Activated B cell treated with CpG ODN at 0.5 μM for 24 hours (primary cell): ENCODE measurements at regions of chr3 and their contacts with region 1.

Region 1: GRCh38 chr3:52428151-52429005 is 16.5 kb downstream of the SEMA3G start:
- DNase-seq: no peak
- ATAC-seq: peak; percentile 57
- H3K4me3 Mint-ChIP-seq: no peak overlapping the region
- H3K27ac Mint-ChIP-seq: no peak overlapping the region
- H3K4me1 Mint-ChIP-seq: peaks cover 4% of the 10 kb centered on the region
- H3K27me3 Mint-ChIP-seq: no peaks in the 10 kb centered on the region
- CTCF ChIP-seq: no peak

Region 2: GRCh38 chr3:51982782-51983577 is 445.4 kb before region 1 on chr3 and contains the start of gene ACY1:
- CTCF ChIA-PET with region 1: no interaction called
- POLR2A ChIA-PET with region 1: no interaction called
- intact Hi-C with region 1: no loop called
- DNase-seq: peak; percentile 70
- ATAC-seq: peak; percentile 79
- H3K4me3 Mint-ChIP-seq: peak within 1 kb of the TSS; percentile 86
- H3K27ac Mint-ChIP-seq: peak within 1 kb of the TSS; percentile 91
- H3K4me1 Mint-ChIP-seq: peaks cover 23% of the 10 kb centered on the region
- H3K27me3 Mint-ChIP-seq: no peaks in the 10 kb centered on the region
- CTCF ChIP-seq: no peak
- total RNA-seq, gene ACY1: 24.9 and 26.7 TPM in 2 replicates

Region 3: GRCh38 chr3:52407779-52408178 is 20.6 kb before region 1 on chr3:
- CTCF ChIA-PET with region 1: interaction called, 11 read pairs
- POLR2A ChIA-PET with region 1: no interaction called
- intact Hi-C with region 1: loop called (anchors 1 kb)
- DNase-seq: no peak
- ATAC-seq: no peak
- H3K4me3 Mint-ChIP-seq: no peak overlapping the region
- H3K27ac Mint-ChIP-seq: no peak overlapping the region
- H3K4me1 Mint-ChIP-seq: peaks cover 35% of the 10 kb centered on the region
- H3K27me3 Mint-ChIP-seq: no peaks in the 10 kb centered on the region
- CTCF ChIP-seq: no peak

Region 4: GRCh38 chr3:52444860-52445793 is 16.7 kb after region 1 on chr3 and contains the start of gene SEMA3G:
- CTCF ChIA-PET with region 1: interaction called, 37 read pairs
- POLR2A ChIA-PET with region 1: no interaction called
- intact Hi-C with region 1: loop called (anchors 1 kb)
- DNase-seq: peak; percentile 62
- ATAC-seq: peak; percentile 97
- H3K4me3 Mint-ChIP-seq: no peak within 1 kb of the TSS
- H3K27ac Mint-ChIP-seq: no peak within 1 kb of the TSS
- H3K4me1 Mint-ChIP-seq: peaks cover 9% of the 10 kb centered on the region
- H3K27me3 Mint-ChIP-seq: peaks cover 3% of the 10 kb centered on the region
- CTCF ChIP-seq: no peak
- total RNA-seq, gene SEMA3G: not detected in 2 replicates